Left lung (tissue), 14 donors: ENCODE measurements at regions of chr14 and their contacts with region 1.

Region 1: DNA sequence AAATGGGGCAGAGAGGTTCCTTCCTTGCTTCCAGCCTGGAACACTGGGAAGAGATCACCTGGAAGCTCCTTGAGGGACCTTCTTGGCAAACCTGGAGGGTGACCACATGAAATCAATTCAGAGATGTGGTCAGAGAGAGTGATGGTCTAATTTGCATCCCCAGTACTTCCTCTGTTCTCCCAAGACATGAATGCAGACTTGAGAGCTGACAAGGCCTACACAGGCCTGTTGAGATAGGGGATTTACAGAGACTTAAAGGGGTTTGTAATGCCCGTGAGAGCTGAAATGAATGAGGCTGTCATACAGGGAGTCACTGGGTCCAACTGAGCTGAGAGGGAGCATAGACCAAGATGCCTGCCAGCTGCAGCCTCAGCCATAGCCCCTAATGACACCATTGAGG is 45.1 kb downstream of the TMX1 start:
- DNase-seq: no peak
- ATAC-seq: no peak
- H3K4me3 ChIP-seq: no peak overlapping the region
- H3K27ac ChIP-seq: no peak overlapping the region
- H3K4me1 ChIP-seq: no peaks in the 10 kb centered on the region
- H3K27me3 ChIP-seq: no peaks in the 10 kb centered on the region
- CTCF ChIP-seq: no peak

Region 2: DNA sequence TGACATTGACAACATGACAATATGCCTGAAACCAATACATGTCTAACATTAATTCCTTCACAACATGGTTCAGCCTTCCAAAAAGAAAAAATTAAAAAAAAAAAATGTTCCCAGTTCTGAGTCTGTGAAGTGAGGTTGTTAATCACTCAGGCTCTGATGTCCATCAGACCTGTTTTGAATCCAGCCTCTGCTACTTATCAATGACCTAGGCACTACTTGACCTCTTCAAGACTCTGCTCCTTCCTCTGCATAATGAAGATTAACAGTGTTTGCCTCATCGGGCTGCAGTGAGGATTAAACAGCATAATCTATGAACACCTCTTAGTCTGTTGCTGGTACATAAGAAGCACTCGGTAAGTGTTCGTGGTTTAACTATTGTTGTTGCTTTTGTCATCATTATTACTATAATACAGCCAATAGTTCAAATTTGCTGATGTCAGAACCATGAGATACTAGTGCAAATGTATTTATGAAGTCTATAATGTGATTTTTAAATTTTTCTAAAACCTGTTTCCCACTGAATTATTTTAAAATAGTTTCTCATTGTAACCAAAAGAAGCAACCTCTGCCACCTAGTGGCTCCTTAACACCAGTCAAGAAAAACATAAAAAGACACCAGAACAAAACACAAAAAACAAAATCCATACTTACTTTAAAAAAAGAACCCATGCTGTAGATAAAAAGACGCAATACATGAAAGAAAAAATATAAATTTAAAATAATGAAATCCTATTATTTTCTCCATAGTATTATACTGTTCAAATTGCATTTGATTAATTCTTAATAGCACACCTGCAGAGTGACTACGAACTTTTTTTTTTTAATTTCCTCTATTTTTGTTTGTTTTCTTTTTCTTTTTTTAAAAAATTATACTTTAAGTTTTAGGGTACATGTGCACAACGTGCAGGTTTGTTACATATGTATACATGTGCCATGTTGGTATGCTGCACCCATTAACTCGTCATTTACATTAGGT is 65.4 kb before region 1 on chr14:
- intact Hi-C with region 1: no loop called
- DNase-seq: peak in 1 of 4 donors; percentile 52
- ATAC-seq: peak; percentile 24
- H3K4me3 ChIP-seq: no peak overlapping the region
- H3K27ac ChIP-seq: no peak overlapping the region
- H3K4me1 ChIP-seq: peaks cover 0 to 5% of the 10 kb centered on the region in 2 donors
- H3K27me3 ChIP-seq: no peaks in the 10 kb centered on the region
- CTCF ChIP-seq: peak in 1 of 2 donors; percentile 47

Region 3: DNA sequence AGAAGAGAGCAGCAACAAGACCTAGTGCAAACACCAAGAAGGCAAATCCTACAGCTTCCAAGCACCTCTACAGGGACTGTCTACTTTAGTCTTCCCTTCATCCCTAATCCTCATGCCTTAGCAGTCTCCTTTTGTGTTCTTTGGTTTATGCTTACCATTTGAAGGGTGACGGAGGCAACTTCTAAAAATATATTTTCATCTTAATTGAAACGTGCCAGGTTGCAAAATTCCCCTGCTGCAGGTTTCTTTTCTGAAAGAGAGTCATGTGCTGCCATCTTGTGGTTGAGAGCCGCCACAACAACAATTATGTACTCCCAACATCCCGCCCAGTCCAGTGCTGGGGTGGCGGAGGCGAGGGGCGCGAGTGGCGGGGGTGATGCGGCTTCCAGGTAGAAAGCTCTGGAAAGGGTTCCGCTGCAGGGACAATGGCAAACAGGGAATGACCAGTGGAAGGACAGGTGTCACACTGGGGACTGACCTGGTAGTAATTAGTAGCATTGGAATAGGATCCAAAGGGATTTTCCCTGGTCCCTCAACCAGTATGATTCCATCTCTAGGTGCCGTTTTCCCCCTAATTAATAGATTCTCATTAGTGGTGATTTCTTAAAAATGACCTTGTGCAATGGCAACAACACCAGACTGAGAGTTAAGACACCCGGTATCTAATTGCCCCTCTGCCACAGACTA is 495.0 kb after region 1 on chr14:
- intact Hi-C with region 1: loop called in 1 of 2 experiments (anchors 5 kb)
- DNase-seq: peak; percentile 53 to 77 (median 61)
- ATAC-seq: peak; percentile 87
- H3K4me3 ChIP-seq: no peak overlapping the region
- H3K27ac ChIP-seq: no peak overlapping the region
- H3K4me1 ChIP-seq: peaks cover 0 to 11% of the 10 kb centered on the region in 2 donors
- H3K27me3 ChIP-seq: peaks cover 0 to 23% of the 10 kb centered on the region in 2 donors
- CTCF ChIP-seq: peak; percentile 82 to 88